ENCODE measurements at regions of chr15 and their contacts with region 1.

Region 1: GRCh38 chr15:47293466-47294162 is 423.7 kb upstream of the SEMA6D start:
- DNase-seq: peak; percentile 41 to 44
- ATAC-seq: peak; percentile 61 to 94 (median 84)
- H3K4me3 ChIP-seq: no peak overlapping the region
- H3K27ac ChIP-seq: no peak overlapping the region
- H3K4me1 ChIP-seq: peaks cover 0 to 9% (median 0%) of the 10 kb centered on the region in 9 donors
- H3K27me3 ChIP-seq: no peaks in the 10 kb centered on the region
- CTCF ChIP-seq: no peak

Region 2: GRCh38 chr15:47246317-47246716 is 47.3 kb before region 1 on chr15:
- intact Hi-C with region 1: loop called in 1 of 10 experiments (anchors 10 kb)
- DNase-seq: no peak
- ATAC-seq: no peak
- H3K4me3 ChIP-seq: no peak overlapping the region
- H3K27ac ChIP-seq: no peak overlapping the region
- H3K4me1 ChIP-seq: no peaks in the 10 kb centered on the region
- H3K27me3 ChIP-seq: no peaks in the 10 kb centered on the region
- CTCF ChIP-seq: no peak

Region 3: GRCh38 chr15:47726399-47726823 is 432.8 kb after region 1 on chr15:
- intact Hi-C with region 1: no loop called
- DNase-seq: no peak
- ATAC-seq: peak; percentile 56 to 89 (median 84)
- H3K4me3 ChIP-seq: peak overlapping the region in 1 of 10 donors; percentile 3
- H3K27ac ChIP-seq: peak overlapping the region; percentile 14 to 88 (median 82)
- H3K4me1 ChIP-seq: peaks cover 5 to 89% (median 59%) of the 10 kb centered on the region in 9 donors
- H3K27me3 ChIP-seq: no peaks in the 10 kb centered on the region
- CTCF ChIP-seq: no peak

Measured in heart right ventricle (tissue), 16 donors.